ENCODE measurements at regions of chr1 and their contacts with region 1.

Region 1: DNA sequence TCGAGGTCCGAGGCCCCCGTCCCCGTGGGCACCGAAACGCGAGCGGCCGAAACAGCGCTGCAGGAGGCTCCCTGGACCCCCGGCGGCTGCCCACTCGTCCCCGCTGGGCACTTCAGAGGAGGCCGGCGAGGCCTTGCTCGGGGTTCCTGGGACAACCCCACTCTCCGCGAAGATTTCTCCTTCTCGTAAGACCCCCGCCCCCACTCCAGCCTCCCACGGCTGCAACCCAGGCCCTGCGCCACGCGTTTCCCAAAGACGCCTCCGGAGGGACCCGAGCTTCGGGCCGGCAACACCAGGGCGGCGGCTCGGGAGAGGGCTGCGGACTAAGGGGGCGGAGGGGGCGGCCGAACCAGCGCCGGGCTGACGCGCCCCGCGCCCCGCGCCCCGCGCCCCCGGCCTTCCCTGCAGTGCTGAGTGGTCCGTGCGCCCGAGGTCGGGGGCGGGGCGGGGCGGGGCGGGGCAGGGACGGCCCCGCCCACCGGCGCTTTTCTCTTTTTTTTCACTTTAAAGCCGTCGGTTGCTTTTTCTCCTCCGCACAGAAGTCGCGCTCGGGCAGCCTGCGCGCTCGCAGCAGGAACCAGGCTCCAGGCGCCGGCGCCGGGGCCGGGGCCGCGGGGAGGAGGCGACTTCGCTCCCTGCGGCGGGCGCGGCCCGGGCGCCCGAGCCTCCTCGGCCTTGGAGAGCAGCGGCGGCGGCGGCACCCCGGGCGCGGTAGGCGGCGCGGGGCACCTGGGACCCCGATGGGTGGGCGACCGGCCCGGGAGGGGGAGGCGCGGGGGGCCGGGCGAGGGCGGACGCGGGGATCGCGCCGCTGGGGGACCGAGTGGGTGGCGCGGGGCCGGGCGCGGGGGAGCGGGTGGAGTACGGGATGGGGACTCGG is at the start of gene SPSB1:
- DNase-seq: peak; percentile 71 to 86 (median 80)
- ATAC-seq: peak; percentile 86
- H3K4me3 ChIP-seq: peak within 1 kb of the TSS; percentile 34
- H3K27ac ChIP-seq: no peak within 1 kb of the TSS
- H3K4me1 ChIP-seq: peaks cover 3 to 20% of the 10 kb centered on the region in 2 experiments; a peak in 3 of 5 replicates
- H3K27me3 ChIP-seq: peaks cover 26 to 52% of the 10 kb centered on the region in 2 experiments
- CTCF ChIP-seq: 0 out of 6 replicates have a peak, but pooled peaks of 1 of the 3 experiments have one; percentile 20
- EP300 ChIP-seq: no peak
- POLR2A ChIP-seq: no peak
- RAD21 ChIP-seq: no peak
- polyA plus RNA-seq, gene SPSB1: 0.06 TPM in 1 of 2 experiments, not detected in the other

Region 2: GRCh38 chr1:8283058-8283884 is 1009.3 kb before region 1 on chr1:
- CTCF ChIA-PET with region 1: interaction called, 10 read pairs
- POLR2A ChIA-PET with region 1: no interaction called
- in situ Hi-C with region 1: no loop called
- intact Hi-C with region 1: no loop called
- DNase-seq: no peak
- ATAC-seq: no peak
- H3K4me3 ChIP-seq: no peak overlapping the region
- H3K27ac ChIP-seq: no peak overlapping the region
- H3K4me1 ChIP-seq: no peaks in the 10 kb centered on the region
- H3K27me3 ChIP-seq: peaks cover 25 to 41% of the 10 kb centered on the region in 2 experiments
- CTCF ChIP-seq: no peak
- EP300 ChIP-seq: no peak
- POLR2A ChIP-seq: no peak
- RAD21 ChIP-seq: no peak

Region 3: DNA sequence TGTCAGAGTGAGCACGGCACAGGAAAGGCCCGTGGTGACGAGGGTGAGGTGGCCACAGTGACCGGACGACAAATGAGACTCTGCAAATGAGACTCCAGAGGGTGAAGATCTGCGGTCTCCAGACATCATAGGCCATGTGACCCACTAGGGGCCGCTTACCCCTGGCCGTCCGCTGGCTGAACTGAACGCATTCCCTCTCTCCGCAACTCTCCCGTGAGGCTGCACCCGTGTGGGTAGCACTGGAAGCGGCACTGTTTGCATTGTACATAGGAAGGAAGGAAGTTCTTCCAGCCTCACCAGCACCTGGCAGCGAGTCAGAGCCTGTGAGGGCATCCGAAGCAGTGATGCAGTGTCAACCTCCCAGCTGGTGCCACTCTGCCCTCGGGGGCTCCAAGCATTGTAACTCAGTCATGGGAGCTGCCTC is 23.5 kb before region 1 on chr1:
- CTCF ChIA-PET with region 1: interaction called, 11 read pairs
- POLR2A ChIA-PET with region 1: no interaction called
- in situ Hi-C with region 1: no loop called
- intact Hi-C with region 1: loop called (anchors 1 kb)
- DNase-seq: no peak
- ATAC-seq: peak; percentile 36; the same call in 2 of the 3 replicates
- H3K4me3 ChIP-seq: no peak overlapping the region
- H3K27ac ChIP-seq: no peak overlapping the region
- H3K4me1 ChIP-seq: peaks cover 0 to 9% of the 10 kb centered on the region in 2 experiments; a peak in 2 of 5 replicates
- H3K27me3 ChIP-seq: peaks cover 64 to 83% of the 10 kb centered on the region in 2 experiments
- CTCF ChIP-seq: no peak
- EP300 ChIP-seq: no peak
- POLR2A ChIP-seq: no peak
- RAD21 ChIP-seq: no peak

Region 4: DNA sequence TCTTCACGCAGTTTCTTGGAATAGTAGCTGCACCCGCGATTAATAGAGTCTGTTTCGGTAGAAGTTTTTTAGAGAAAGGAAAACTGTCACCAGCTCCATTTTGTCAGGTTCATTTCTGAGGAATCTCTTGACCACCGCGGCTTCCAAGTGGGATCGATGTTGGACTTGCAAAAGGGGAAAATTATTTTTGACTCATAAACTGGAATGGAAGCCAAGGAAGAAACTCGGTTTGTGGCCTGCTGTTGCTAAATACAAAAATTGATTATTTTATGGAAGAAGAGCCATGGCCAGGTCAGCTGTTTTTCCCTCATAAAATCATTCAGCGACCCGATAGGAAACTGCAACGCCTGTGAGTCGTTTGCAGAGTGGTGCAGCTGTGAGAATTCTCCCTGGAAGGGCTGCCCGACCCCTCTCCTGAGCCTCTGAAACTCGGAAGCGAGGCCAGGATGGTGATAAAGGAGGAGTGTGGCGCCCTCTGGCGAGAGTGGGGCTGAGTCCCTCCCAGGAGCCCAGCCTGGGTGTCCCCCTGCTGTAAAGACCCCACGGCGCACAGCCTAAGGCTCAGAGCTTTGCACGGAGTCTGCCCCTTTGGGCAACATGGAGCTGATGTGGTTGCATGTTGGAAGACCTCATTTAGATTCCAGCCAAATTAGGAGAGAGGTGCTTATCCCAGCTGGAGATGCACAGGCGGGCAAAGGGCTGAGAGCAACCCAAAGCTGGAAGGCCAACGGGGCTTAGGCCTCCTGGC is 163.1 kb after region 1 on chr1:
- CTCF ChIA-PET with region 1: interaction called, 90 read pairs
- POLR2A ChIA-PET with region 1: interaction called, 4 read pairs
- in situ Hi-C with region 1: loop called (anchors 10 kb)
- intact Hi-C with region 1: loop called (anchors 1 kb)
- DNase-seq: peak; percentile 64 to 76 (median 68)
- ATAC-seq: peak; percentile 95
- H3K4me3 ChIP-seq: no peak overlapping the region
- H3K27ac ChIP-seq: no peak overlapping the region
- H3K4me1 ChIP-seq: no peaks in the 10 kb centered on the region
- H3K27me3 ChIP-seq: peaks cover 49 to 76% of the 10 kb centered on the region in 2 experiments
- CTCF ChIP-seq: peak; percentile 81 to 91 (median 90)
- EP300 ChIP-seq: no peak
- POLR2A ChIP-seq: no peak
- RAD21 ChIP-seq: peak; percentile 88 to 95

Region 5: DNA sequence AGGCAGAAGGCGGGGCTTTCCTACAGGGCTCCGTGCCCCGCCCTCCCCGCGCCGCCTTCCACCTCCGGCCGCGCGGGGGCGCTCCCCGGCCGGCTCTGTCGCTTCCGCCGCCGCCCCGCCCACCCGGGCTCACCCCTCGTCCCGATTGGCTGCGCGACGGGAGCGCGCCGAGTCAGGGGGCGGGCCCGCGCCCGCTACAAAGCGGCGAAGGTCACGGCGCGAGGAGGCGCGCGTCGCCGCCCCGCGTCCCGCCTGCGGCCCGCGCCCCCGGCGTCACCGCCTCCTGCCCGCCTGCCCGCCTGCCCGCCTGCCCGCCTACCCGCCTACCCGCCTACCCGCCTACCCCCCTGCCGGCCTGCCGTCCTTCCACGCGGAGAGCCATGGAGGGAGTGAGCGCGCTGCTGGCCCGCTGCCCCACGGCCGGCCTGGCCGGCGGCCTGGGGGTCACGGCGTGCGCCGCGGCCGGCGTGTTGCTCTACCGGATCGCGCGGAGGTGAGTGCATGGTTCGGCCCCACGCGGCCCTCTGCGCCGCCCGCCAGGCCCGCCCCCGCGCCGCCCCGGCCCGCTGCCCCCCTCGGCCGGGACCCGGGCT is 296.0 kb after region 1 on chr1 and contains the start of gene TMEM201:
- CTCF ChIA-PET with region 1: interaction called, 3 read pairs
- POLR2A ChIA-PET with region 1: no interaction called
- in situ Hi-C with region 1: no loop called
- intact Hi-C with region 1: loop called (anchors 10 kb)
- DNase-seq: peak; percentile 98 to 99 (median 99)
- ATAC-seq: peak; percentile 90
- H3K4me3 ChIP-seq: peak within 1 kb of the TSS; percentile 61
- H3K27ac ChIP-seq: peak within 1 kb of the TSS; percentile 76
- H3K4me1 ChIP-seq: peaks cover 31 to 52% of the 10 kb centered on the region in 2 experiments
- H3K27me3 ChIP-seq: no peaks in the 10 kb centered on the region
- CTCF ChIP-seq: peak; percentile 69 to 91 (median 89)
- EP300 ChIP-seq: 0 out of 2 replicates have a peak, but pooled peaks have one; percentile 20
- POLR2A ChIP-seq: no peak
- RAD21 ChIP-seq: peak; percentile 28 to 57; a peak in 3 of 4 replicates
- polyA plus RNA-seq, gene TMEM201: 0.42 to 0.46 TPM

Measured in K562 (cell line).